ENCODE measurements at regions of chr1 and their contacts with region 1.

Region 1: GRCh38 chr1:17502326-17502778 is 37.1 kb upstream of the ARHGEF10L start:
- DNase-seq: peak; percentile 90

Region 2: DNA sequence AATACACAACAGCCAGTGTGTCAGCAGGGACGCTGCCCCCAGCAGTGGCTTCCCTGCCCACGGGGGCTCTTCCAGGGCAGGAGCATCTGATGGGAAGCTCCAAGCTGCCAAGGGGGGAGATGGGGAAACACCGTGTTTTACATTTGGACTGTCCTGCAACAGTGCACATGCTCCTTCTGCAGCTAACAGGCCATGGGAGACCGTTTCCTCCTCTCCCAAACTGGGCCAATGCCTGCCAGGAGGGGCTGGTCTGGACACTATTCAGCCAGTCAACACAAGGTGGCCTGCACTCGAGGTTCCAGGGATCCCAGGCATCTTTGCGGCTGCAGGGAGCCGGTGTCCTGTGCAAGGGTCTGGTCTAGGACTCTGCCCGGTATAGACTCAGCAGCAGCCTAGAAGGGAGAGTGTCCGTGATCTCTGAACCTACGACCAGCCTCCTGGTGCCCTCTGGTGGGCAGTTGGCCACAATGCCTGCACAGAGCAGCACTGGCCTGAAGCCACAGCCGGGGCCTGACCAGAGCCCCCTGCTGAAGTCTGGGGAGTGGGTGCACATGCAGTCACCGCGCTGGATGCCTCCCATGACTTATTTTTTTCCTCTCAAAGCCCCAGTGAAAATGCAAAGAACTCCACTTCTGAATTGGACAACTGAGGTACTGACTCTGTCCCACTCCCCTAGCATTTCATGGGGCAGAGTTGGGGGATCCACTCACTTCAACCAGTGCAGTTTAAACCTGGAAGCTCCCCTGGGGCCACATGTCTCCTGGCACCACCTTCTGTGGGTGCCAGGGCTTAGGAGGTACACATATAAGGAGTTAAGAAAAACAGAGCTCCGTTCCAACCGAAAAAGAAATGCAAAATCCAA is 96.2 kb before region 1 on chr1:
- intact Hi-C with region 1: no loop called
- DNase-seq: peak; percentile 81

Region 3: GRCh38 chr1:17606826-17607440 is 104.6 kb after region 1 on chr1:
- intact Hi-C with region 1: loop called (anchors 1 kb)
- DNase-seq: peak; percentile 83

Measured in cardiac septum (tissue), 1 donor.